ENCODE measurements at regions of chr1 and their contacts with region 1.

Region 1: DNA sequence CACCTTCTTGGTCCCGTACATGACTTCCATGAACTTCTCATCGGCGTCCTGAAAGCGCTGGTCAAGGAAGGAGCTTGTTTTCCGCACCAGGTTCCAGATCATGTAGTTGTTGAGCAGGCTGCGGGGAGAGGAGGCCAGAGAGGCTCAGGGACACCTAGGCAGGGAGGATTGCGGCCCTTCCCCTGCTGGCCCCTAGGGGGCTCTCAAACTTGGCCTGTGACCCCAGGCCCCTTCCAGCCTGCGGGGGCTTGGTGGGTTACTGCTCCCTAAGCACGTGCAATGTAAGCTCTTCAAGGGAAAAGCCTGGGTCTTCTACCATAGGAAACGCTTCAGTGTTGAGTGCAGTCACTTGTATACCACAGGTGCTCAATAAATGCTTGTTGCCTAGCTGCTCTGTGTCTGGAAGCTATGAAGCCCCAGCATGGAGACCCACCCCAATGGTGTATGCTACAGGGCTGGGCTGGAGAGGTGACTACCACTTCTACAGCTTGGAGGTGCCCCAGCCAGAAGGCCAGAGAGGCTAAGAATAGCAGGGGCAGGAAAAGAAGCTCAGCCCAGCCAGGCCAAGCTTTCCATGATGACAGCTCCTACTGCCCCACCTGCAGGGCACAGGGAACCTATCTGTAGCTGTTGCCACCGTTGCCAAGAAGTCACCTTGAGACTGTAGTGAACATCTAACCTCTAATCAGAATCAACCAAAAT is 45.1 kb downstream of the ECE1 start:
- DNase-seq: no peak
- H3K4me3 ChIP-seq: no peak overlapping the region
- H3K27ac ChIP-seq: no peak overlapping the region
- H3K4me1 ChIP-seq: peaks cover 0 to 4% (median 0%) of the 10 kb centered on the region in 4 donors
- H3K27me3 ChIP-seq: no peaks in the 10 kb centered on the region
- CTCF ChIP-seq: peak in 2 of 5 experiments; percentile 22 to 33
- EP300 ChIP-seq: no peak
- POLR2A ChIP-seq: no peak

Region 2: GRCh38 chr1:19322481-19322880 is 1922.7 kb before region 1 on chr1:
- in situ Hi-C with region 1: no loop called
- intact Hi-C with region 1: loop called (anchors 5 kb)
- DNase-seq: no peak
- H3K4me3 ChIP-seq: no peak overlapping the region
- H3K27ac ChIP-seq: no peak overlapping the region
- H3K4me1 ChIP-seq: no peaks in the 10 kb centered on the region
- H3K27me3 ChIP-seq: no peaks in the 10 kb centered on the region
- CTCF ChIP-seq: no peak
- EP300 ChIP-seq: no peak
- POLR2A ChIP-seq: no peak

Region 3: GRCh38 chr1:21350187-21350885 is 105.2 kb after region 1 on chr1:
- in situ Hi-C with region 1: no loop called
- intact Hi-C with region 1: loop called (anchors 5 kb)
- DNase-seq: no peak
- H3K4me3 ChIP-seq: no peak overlapping the region
- H3K27ac ChIP-seq: no peak overlapping the region
- H3K4me1 ChIP-seq: peaks cover 0 to 7% (median 3%) of the 10 kb centered on the region in 4 donors
- H3K27me3 ChIP-seq: no peaks in the 10 kb centered on the region
- CTCF ChIP-seq: no peak
- EP300 ChIP-seq: no peak
- POLR2A ChIP-seq: no peak

Measured in transverse colon (tissue), 4 donors.